ENCODE measurements at regions of chr4 and their contacts with region 1.

Region 1: DNA sequence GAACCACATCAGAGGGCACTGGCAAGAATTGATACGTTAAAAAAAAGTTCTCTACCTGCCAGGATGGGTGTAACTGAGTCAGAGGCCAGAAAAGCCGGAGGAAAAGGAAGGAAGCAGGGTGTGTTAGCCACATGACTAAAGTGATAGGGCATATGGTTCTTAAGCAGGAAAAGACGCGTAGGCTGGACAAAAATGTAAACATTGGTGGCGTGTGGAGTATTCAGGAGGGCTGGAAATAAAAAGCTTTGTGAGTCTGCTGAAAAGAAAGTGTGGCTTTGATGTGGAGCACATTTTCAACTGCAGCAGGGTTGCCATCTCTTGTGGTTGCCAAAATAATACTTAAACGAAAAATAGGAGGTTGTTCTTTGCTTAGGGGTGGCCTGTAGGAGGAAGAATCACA is 186.5 kb upstream of the RPL34 start:
- DNase-seq: peak; percentile 88
- H3K4me3 Mint-ChIP-seq: peak overlapping the region; percentile 54
- H3K27ac Mint-ChIP-seq: peak overlapping the region; percentile 75
- H3K4me1 Mint-ChIP-seq: peaks cover 33% of the 10 kb centered on the region
- H3K27me3 Mint-ChIP-seq: peaks cover 9% of the 10 kb centered on the region

Region 2: DNA sequence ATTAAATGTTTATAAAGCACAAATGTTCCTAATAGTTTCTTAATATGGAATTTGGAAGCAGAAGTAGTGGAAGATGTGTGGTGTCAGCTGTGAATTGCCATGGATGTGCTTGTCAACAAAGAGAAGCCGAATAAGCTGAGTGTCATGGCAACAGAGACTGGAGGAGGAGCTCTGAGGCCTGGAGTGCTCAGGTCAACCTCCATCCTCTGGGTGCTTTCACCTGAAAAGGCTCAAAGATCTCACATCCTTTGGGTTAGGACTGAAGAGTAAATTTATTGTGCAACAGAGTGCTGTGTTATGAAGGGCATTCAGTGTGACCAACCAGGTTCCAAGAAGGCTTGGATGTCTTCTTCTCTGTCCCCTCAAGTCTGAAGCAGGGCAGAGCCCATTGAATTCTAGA is 590.4 kb before region 1 on chr4:
- intact Hi-C with region 1: no loop called
- DNase-seq: no peak
- H3K4me3 Mint-ChIP-seq: no peak overlapping the region
- H3K27ac Mint-ChIP-seq: no peak overlapping the region
- H3K4me1 Mint-ChIP-seq: no peaks in the 10 kb centered on the region
- H3K27me3 Mint-ChIP-seq: peaks cover 10% of the 10 kb centered on the region

Region 3: DNA sequence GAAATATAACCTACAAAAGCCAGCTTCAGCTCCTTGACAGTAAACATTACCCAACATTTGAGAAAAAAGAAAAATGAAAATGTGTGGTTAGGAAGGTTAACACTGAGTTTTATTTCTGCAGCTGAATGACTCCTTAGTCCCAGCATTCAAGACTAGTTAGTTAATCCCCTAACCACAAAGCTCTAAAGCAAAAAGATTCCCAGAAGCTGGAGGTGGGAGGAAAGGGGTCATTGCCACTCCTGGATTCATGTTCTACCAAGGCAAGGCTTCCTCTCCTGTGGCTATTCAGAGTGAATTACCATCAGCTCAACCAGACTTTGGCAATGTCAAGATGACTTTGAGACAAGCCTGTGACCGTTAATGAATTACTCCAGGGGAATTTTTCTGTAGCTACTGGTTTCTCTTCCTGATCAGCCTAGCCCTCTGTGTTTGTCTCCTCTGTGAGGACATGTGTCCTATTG is 380.6 kb before region 1 on chr4:
- intact Hi-C with region 1: loop called (anchors 5 kb)
- DNase-seq: no peak
- H3K4me3 Mint-ChIP-seq: peak overlapping the region; percentile 31
- H3K27ac Mint-ChIP-seq: peak overlapping the region; percentile 81
- H3K4me1 Mint-ChIP-seq: peaks cover 62% of the 10 kb centered on the region
- H3K27me3 Mint-ChIP-seq: no peaks in the 10 kb centered on the region

Region 4: GRCh38 chr4:108166441-108167315 is 267.2 kb before region 1 on chr4:
- intact Hi-C with region 1: loop called (anchors 2 kb)
- DNase-seq: peak; percentile 90
- H3K4me3 Mint-ChIP-seq: peak overlapping the region; percentile 97
- H3K27ac Mint-ChIP-seq: peak overlapping the region; percentile 94
- H3K4me1 Mint-ChIP-seq: peaks cover 55% of the 10 kb centered on the region
- H3K27me3 Mint-ChIP-seq: peaks cover 14% of the 10 kb centered on the region

Region 5: GRCh38 chr4:108417923-108418322 is 15.9 kb before region 1 on chr4:
- intact Hi-C with region 1: no loop called
- DNase-seq: peak; percentile 48
- H3K4me3 Mint-ChIP-seq: no peak overlapping the region
- H3K27ac Mint-ChIP-seq: no peak overlapping the region
- H3K4me1 Mint-ChIP-seq: peaks cover 5% of the 10 kb centered on the region
- H3K27me3 Mint-ChIP-seq: peaks cover 16% of the 10 kb centered on the region

Region 6: DNA sequence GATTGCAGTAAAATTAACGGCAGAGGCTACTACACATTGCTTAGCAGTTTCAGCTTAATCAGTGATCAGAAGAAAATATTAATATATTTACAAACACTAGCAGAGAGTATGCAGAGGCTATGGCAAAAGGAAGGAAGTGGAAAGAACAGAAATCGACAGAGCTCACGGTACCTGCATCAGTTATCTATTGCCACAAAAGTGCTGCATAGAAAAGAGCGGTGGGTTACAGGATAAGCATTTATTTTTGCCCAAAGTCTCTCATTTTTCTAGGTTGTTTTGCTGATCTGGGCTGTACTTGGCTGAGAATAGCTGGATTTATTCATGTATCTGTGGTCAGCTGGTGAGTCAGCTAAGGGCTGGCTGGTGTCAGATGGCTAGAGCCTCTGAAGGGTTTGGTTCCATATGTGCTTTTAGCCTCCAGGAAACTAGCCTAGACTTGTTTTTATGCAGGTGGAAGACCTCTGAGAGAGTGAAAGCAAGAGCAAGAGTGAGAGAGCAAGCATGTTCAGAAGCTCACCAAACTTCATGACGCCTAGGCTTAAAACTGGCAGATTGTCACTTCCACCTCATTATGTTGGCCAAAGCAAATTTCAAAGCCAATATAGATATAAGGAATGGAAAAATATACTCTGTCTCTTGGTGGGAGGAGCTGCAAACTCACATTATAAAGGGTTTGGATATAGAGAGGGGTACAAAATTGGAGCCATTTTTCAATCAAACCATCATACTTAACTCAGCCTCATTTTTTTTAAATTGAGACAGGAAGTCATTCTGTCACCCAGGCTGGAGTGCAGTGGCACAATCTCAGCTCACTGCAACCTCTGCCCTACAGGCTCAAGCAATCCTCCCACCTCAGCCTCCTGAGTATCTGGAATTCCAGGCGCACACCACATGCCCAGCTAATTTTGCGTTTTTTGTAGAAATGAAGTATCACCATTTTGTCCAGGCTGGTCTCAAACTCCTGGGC is 33.4 kb after region 1 on chr4:
- intact Hi-C with region 1: loop called (anchors 5 kb)
- DNase-seq: peak; percentile 83
- H3K4me3 Mint-ChIP-seq: peak overlapping the region; percentile 64
- H3K27ac Mint-ChIP-seq: peak overlapping the region; percentile 88
- H3K4me1 Mint-ChIP-seq: peaks cover 27% of the 10 kb centered on the region
- H3K27me3 Mint-ChIP-seq: no peaks in the 10 kb centered on the region

Region 7: GRCh38 chr4:108512615-108513505 is 79.0 kb after region 1 on chr4:
- intact Hi-C with region 1: no loop called
- DNase-seq: peak; percentile 80
- H3K4me3 Mint-ChIP-seq: peak overlapping the region; percentile 53
- H3K27ac Mint-ChIP-seq: no peak overlapping the region
- H3K4me1 Mint-ChIP-seq: peaks cover 16% of the 10 kb centered on the region
- H3K27me3 Mint-ChIP-seq: peaks cover 4% of the 10 kb centered on the region

Region 8: GRCh38 chr4:108570993-108571569 is 137.2 kb after region 1 on chr4:
- intact Hi-C with region 1: loop called (anchors 5 kb)
- DNase-seq: no peak
- H3K4me3 Mint-ChIP-seq: no peak overlapping the region
- H3K27ac Mint-ChIP-seq: peak overlapping the region; percentile 13
- H3K4me1 Mint-ChIP-seq: peaks cover 14% of the 10 kb centered on the region
- H3K27me3 Mint-ChIP-seq: peaks cover 1% of the 10 kb centered on the region

Measured in activated CD4-positive, alpha-beta T cell treated with anti-CD3 and anti-CD28 coated beads, Interleukin-2, amount 10 ng/mL, durations not matched to agents 24 days and 14 days (primary cell).